Mammary epithelial cell (primary cell): ENCODE measurements at regions of chr5 and their contacts with region 1.

Region 1: DNA sequence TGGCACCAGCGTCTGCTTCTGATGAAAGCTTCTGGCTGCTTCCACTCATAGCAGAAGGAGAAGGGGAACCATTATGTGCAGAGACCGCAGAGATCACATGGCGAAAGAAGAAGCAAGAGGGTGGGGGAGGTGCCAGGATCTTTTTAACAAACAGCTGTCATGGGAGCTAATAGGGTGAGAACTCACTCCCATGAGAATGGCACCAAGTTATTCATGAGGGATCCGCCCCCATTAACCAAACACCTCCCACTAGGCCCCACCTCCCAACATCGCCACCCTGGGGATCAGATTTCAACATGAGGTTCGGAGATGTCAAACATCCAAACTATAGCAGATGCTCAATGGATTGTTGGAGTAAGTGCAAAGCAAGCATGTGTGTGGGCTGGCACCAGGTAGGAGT is 125.8 kb upstream of the SLIT3 start:
- DNase-seq: no peak
- H3K4me3 ChIP-seq: no peak overlapping the region
- H3K27ac ChIP-seq: no peak overlapping the region
- H3K4me1 ChIP-seq: peaks cover 14% of the 10 kb centered on the region
- H3K27me3 ChIP-seq: no peaks in the 10 kb centered on the region
- CTCF ChIP-seq: no peak

Region 2: DNA sequence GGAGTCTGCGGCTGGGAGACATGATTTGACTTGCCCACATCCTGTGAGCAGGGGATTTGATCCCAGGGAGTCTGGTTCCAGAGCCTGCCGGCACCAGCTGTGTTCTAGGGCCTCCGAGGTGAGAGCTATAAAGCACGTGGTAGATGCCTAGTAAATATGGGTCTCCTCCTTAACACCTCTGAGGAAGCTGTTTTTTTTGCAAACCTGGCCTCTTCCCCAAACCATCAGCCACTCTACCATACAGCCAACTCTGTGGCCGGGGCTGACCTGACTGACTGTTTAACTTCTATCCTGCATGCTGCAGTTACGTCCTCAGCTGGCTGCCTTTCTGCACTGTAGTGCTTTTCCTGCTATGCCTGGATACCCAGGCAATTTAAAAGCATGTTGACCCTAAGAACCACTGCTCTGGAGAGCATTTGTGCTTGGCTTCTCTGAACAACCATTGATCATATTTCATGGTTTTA is 346.3 kb before region 1 on chr5:
- CTCF ChIA-PET with region 1: no interaction called
- dilution Hi-C with region 1: no loop called
- in situ Hi-C with region 1: no loop called
- intact Hi-C with region 1: no loop called
- DNase-seq: peak; percentile 6
- H3K4me3 ChIP-seq: no peak overlapping the region
- H3K27ac ChIP-seq: no peak overlapping the region
- H3K4me1 ChIP-seq: peaks cover 9% of the 10 kb centered on the region
- H3K27me3 ChIP-seq: no peaks in the 10 kb centered on the region
- CTCF ChIP-seq: no peak

Region 3: GRCh38 chr5:169474226-169474625 is 47.4 kb after region 1 on chr5:
- CTCF ChIA-PET with region 1: no interaction called
- dilution Hi-C with region 1: loop called (anchors 5 kb)
- in situ Hi-C with region 1: no loop called
- intact Hi-C with region 1: no loop called
- DNase-seq: peak; percentile 40
- H3K4me3 ChIP-seq: no peak overlapping the region
- H3K27ac ChIP-seq: no peak overlapping the region
- H3K4me1 ChIP-seq: no peaks in the 10 kb centered on the region
- H3K27me3 ChIP-seq: peaks cover 2% of the 10 kb centered on the region
- CTCF ChIP-seq: no peak